Naive thymus-derived CD4-positive, alpha-beta T cell (primary cell): ENCODE measurements at regions of chr5 and their contacts with region 1.

Region 1: GRCh38 chr5:157464519-157465171 is 4.6 kb downstream of the NIPAL4 start:
- DNase-seq: peak in 1 of 9 donors; percentile 56
- ATAC-seq: peak; percentile 80
- H3K4me3 ChIP-seq: no peak overlapping the region
- H3K4me3 Mint-ChIP-seq: peak overlapping the region in 1 of 10 donors; percentile 33
- H3K27ac ChIP-seq: no peak overlapping the region
- H3K27ac Mint-ChIP-seq: peak overlapping the region in 1 of 9 donors; percentile 54
- H3K4me1 ChIP-seq: no peaks in the 10 kb centered on the region
- H3K4me1 Mint-ChIP-seq: peaks cover 0 to 37% (median 7%) of the 10 kb centered on the region in 7 donors
- H3K27me3 ChIP-seq: no peaks in the 10 kb centered on the region
- H3K27me3 Mint-ChIP-seq: peaks cover 11 to 33% (median 20%) of the 10 kb centered on the region in 5 donors

Region 2: GRCh38 chr5:156879665-156880285 is 584.9 kb before region 1 on chr5:
- CTCF ChIA-PET with region 1: no interaction called
- POLR2A ChIA-PET with region 1: no interaction called
- intact Hi-C with region 1: no loop called
- DNase-seq: no peak
- ATAC-seq: no peak
- H3K4me3 ChIP-seq: no peak overlapping the region
- H3K4me3 Mint-ChIP-seq: no peak overlapping the region
- H3K27ac ChIP-seq: no peak overlapping the region
- H3K27ac Mint-ChIP-seq: no peak overlapping the region
- H3K4me1 ChIP-seq: peaks cover 0 to 3% of the 10 kb centered on the region in 2 donors
- H3K4me1 Mint-ChIP-seq: peaks cover 2 to 13% (median 7%) of the 10 kb centered on the region in 7 donors
- H3K27me3 ChIP-seq: no peaks in the 10 kb centered on the region
- H3K27me3 Mint-ChIP-seq: no peaks in the 10 kb centered on the region

Region 3: GRCh38 chr5:157290981-157291711 is 173.5 kb before region 1 on chr5:
- CTCF ChIA-PET with region 1: no interaction called
- POLR2A ChIA-PET with region 1: no interaction called
- intact Hi-C with region 1: no loop called
- DNase-seq: no peak
- ATAC-seq: peak; percentile 68
- H3K4me3 ChIP-seq: no peak overlapping the region
- H3K4me3 Mint-ChIP-seq: peak overlapping the region in 2 of 10 donors; percentile 13 to 67
- H3K27ac ChIP-seq: peak overlapping the region; percentile 42
- H3K27ac Mint-ChIP-seq: peak overlapping the region; percentile 63 to 95 (median 89)
- H3K4me1 ChIP-seq: peaks cover 0 to 54% of the 10 kb centered on the region in 2 donors
- H3K4me1 Mint-ChIP-seq: peaks cover 38 to 93% (median 66%) of the 10 kb centered on the region in 7 donors
- H3K27me3 ChIP-seq: no peaks in the 10 kb centered on the region
- H3K27me3 Mint-ChIP-seq: no peaks in the 10 kb centered on the region

Region 4: GRCh38 chr5:157449011-157449723 is 15.5 kb before region 1 on chr5:
- CTCF ChIA-PET with region 1: no interaction called
- POLR2A ChIA-PET with region 1: no interaction called
- intact Hi-C with region 1: loop called in 1 of 2 experiments (anchors 2 kb)
- DNase-seq: no peak
- ATAC-seq: no peak
- H3K4me3 ChIP-seq: no peak overlapping the region
- H3K4me3 Mint-ChIP-seq: no peak overlapping the region
- H3K27ac ChIP-seq: no peak overlapping the region
- H3K27ac Mint-ChIP-seq: no peak overlapping the region
- H3K4me1 ChIP-seq: no peaks in the 10 kb centered on the region
- H3K4me1 Mint-ChIP-seq: no peaks in the 10 kb centered on the region
- H3K27me3 ChIP-seq: no peaks in the 10 kb centered on the region
- H3K27me3 Mint-ChIP-seq: peaks cover 0 to 5% (median 0%) of the 10 kb centered on the region in 5 donors

Region 5: DNA sequence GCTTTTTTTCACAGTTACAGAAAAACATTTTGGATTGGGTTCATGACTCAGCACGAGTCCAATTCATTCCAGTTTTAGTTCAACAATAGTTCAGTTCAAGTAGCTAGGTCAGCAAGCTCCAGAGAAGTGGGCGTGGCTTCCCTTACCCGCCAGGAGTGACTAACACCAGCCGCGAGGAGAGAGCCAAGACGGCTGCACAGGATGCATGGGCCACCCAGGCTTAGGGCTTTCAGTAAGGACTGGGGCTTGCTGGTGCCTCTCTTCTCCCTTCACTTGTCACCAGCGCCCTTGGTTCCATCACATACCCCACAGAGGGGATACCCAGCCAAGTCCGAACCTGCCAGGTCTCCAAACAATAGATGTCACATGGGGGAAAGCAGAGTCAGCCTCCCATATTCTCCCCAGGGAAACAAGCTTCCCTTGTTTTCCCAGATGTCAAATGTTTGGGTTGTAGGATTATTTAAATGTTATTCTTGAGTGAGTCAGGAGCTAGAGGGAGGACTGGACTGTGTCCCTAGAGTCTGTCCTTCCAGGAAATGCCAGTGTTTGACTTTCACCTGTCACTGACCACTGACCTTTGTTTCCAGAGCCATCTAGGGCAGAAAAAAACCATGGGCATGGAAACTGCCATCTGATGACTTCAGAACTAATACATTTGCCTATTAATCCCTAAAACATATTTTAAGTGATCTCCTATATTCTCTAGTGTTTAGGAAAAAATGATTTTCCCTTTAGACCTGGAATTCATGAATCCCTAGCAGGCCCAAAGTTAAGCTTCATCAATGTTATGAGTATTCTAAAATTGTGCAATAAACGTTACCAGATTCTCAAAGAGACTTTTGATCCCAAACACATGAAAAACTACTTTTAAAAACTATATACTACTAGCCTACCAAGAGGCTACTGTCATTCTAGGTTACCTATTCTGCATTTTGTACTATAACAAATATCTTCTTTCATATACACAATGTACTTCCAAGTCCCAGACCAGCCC is 47.3 kb after region 1 on chr5:
- CTCF ChIA-PET with region 1: no interaction called
- POLR2A ChIA-PET with region 1: no interaction called
- intact Hi-C with region 1: no loop called
- DNase-seq: no peak
- ATAC-seq: no peak
- H3K4me3 ChIP-seq: no peak overlapping the region
- H3K4me3 Mint-ChIP-seq: no peak overlapping the region
- H3K27ac ChIP-seq: no peak overlapping the region
- H3K27ac Mint-ChIP-seq: peak overlapping the region in 1 of 9 donors; percentile 67
- H3K4me1 ChIP-seq: no peaks in the 10 kb centered on the region
- H3K4me1 Mint-ChIP-seq: peaks cover 0 to 72% (median 0%) of the 10 kb centered on the region in 7 donors
- H3K27me3 ChIP-seq: no peaks in the 10 kb centered on the region
- H3K27me3 Mint-ChIP-seq: no peaks in the 10 kb centered on the region